PC-3 (cell line): ENCODE measurements at regions of chr5 and their contacts with region 1.

Region 1: GRCh38 chr5:425714-426113 is 17.3 kb upstream of the EXOC3 start:
- DNase-seq: peak; percentile 27
- ATAC-seq: peak; percentile 38; the same call in 1 of the 2 replicates
- H3K4me3 ChIP-seq: no peak overlapping the region
- H3K27ac ChIP-seq: no peak overlapping the region
- H3K4me1 ChIP-seq: no peaks in the 10 kb centered on the region; the same call in 1 of the 2 replicates
- H3K27me3 ChIP-seq: no peaks in the 10 kb centered on the region
- CTCF ChIP-seq: peak; percentile 47

Region 2: DNA sequence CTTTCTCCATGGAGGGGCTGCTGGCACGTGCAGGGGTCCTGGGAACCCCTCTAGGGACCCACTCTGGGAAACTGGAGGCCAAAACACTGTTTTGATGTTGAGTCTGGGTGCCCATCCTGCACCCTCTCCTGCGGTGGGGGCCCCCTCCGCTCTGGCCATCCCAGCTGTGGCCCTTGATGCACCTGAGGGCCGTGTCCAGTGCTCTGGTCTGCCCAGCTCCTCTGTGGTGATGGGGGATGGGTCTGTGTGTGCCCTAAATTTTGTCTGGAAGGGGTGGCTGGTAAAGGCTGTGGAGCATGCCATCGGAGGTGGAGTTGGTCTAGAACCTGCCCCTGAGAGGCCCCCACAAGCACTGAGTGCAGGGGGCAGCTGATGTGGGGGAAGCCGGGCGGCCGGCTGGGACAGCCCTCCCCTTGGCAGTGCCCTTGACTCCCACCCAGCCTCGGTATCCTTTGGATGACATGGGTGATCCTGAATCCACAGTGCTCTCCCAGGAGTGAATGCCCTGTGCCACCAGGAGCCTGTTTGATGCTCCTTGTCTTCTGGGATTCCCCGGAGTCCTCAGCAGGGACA is 77.9 kb before region 1 on chr5:
- CTCF ChIA-PET with region 1: interaction called, 3 read pairs
- POLR2A ChIA-PET with region 1: interaction called, 11 read pairs
- intact Hi-C with region 1: no loop called
- DNase-seq: no peak
- ATAC-seq: no peak
- H3K4me3 ChIP-seq: no peak overlapping the region
- H3K27ac ChIP-seq: no peak overlapping the region
- H3K4me1 ChIP-seq: no peaks in the 10 kb centered on the region
- H3K27me3 ChIP-seq: no peaks in the 10 kb centered on the region
- CTCF ChIP-seq: no peak

Region 3: DNA sequence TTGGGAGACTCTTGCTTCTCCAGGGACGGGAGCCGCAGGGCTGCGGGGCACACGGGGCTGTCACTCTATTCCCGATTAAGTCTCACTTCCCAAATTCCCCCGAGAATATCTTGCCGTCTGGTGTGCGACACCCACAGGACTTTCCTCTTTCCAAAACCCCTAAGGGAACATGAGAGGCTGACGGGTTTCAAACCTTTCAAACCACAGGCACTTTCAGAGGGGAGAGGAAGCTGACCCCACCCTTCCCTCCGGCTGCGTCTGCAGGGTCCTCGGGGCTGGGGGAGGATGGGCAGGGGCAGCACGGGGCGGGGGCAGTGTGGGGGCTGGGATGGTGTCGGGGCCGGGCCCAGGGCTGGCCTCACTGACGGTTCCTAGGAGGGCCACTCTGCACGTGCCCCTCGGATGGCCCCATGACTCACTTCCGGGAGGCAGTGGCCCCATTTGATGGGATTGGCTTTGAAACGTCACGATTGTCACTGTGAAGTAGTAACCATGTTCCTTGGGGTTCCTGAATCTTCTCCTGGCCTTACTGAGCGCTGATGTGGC is 60.3 kb after region 1 on chr5:
- CTCF ChIA-PET with region 1: no interaction called
- POLR2A ChIA-PET with region 1: no interaction called
- intact Hi-C with region 1: no loop called
- DNase-seq: no peak
- ATAC-seq: no peak
- H3K4me3 ChIP-seq: no peak overlapping the region
- H3K27ac ChIP-seq: no peak overlapping the region
- H3K4me1 ChIP-seq: no peaks in the 10 kb centered on the region
- H3K27me3 ChIP-seq: no peaks in the 10 kb centered on the region
- CTCF ChIP-seq: no peak